SK-N-SH (cell line): ENCODE measurements at regions of chr2 and their contacts with region 1.

Region 1: DNA sequence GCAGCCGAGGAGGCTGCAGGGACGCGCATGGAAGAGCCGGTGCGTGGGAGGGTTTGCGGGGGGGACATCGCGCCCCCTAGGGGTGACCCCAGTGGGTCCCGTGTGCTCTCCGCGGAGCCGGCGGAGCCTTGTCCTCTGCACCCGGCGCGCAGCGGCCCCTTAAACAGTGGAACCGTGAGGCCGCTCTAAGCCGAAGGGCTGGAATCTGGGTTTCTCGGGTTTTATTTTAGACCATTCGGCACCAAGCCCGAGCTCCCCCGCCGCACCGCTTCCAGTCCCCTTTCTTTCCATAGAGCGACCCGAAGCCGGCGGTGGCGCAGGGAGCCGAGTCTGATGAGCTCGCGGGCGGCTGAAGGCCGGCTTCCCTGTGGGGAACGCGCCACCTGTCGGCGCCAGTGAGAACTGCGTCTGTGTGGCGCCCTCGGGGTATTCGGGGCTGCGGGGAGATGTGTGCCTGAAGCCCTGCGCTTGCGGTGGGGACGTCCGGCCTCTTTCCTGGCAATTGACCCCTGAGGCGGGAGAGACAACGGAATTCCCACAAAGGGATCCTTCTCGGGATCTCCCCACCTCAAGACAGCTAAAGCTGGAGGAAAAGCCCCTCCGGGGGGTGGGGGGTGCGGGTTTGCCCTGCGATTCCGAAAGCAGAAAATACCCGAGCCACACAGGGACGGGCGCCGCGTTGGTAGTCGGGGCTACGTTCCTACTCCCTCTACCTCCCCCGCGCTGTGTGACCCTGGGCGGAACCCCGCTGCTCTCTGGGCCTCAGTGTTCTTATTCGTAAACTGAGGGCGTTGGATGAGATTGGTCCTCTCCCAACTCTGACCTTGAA is 8.2 kb upstream of the EN1 start:
- DNase-seq: peak; percentile 93
- H3K4me3 ChIP-seq: peak overlapping the region; percentile 24 to 65
- H3K27ac ChIP-seq: no peak overlapping the region
- H3K4me1 ChIP-seq: no peaks in the 10 kb centered on the region; a peak in 1 of 4 replicates
- H3K27me3 ChIP-seq: peaks cover 99% of the 10 kb centered on the region
- CTCF ChIP-seq: peak; percentile 87
- EP300 ChIP-seq: no peak
- RAD21 ChIP-seq: peak; percentile 82

Region 2: GRCh38 chr2:118032169-118033013 is 823.3 kb before region 1 on chr2:
- CTCF ChIA-PET with region 1: interaction called, 12 read pairs
- POLR2A ChIA-PET with region 1: no interaction called
- DNase-seq: peak; percentile 53
- H3K4me3 ChIP-seq: no peak overlapping the region; a peak in 1 of 4 replicates
- H3K27ac ChIP-seq: no peak overlapping the region
- H3K4me1 ChIP-seq: no peaks in the 10 kb centered on the region
- H3K27me3 ChIP-seq: peaks cover 17% of the 10 kb centered on the region; the same call in 1 of the 2 replicates
- CTCF ChIP-seq: peak; percentile 82
- EP300 ChIP-seq: no peak
- RAD21 ChIP-seq: peak; percentile 56

Region 3: DNA sequence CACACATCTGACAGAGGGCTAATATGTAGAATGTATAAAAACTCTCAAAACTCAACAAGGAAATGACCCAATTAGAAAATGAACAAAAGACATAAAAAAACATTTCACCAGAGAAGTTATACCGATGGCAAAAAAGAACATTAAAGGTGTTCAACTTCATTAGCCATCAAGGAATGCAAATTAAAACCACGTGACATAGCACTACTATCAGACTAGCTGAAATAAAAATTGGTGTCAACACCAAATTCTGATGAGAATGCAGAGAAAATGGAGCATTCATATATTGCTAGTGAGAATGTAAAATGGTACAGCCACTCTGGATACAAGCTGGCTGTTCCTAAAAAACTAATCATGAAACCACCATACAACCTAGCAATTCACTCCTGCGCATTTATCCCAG is 639.4 kb before region 1 on chr2:
- CTCF ChIA-PET with region 1: interaction called, 57 read pairs
- POLR2A ChIA-PET with region 1: no interaction called
- DNase-seq: no peak
- H3K4me3 ChIP-seq: no peak overlapping the region
- H3K27ac ChIP-seq: no peak overlapping the region
- H3K4me1 ChIP-seq: no peaks in the 10 kb centered on the region
- H3K27me3 ChIP-seq: peaks cover 5% of the 10 kb centered on the region; the same call in 1 of the 2 replicates
- CTCF ChIP-seq: no peak
- EP300 ChIP-seq: no peak
- RAD21 ChIP-seq: no peak

Region 4: GRCh38 chr2:118227700-118228508 is 627.8 kb before region 1 on chr2:
- CTCF ChIA-PET with region 1: interaction called, 57 read pairs
- POLR2A ChIA-PET with region 1: no interaction called
- DNase-seq: no peak
- H3K4me3 ChIP-seq: no peak overlapping the region
- H3K27ac ChIP-seq: no peak overlapping the region
- H3K4me1 ChIP-seq: peaks cover 0 to 5% of the 10 kb centered on the region in 2 experiments; a peak in 1 of 4 replicates
- H3K27me3 ChIP-seq: peaks cover 57% of the 10 kb centered on the region
- CTCF ChIP-seq: no peak
- EP300 ChIP-seq: no peak
- RAD21 ChIP-seq: no peak

Region 5: DNA sequence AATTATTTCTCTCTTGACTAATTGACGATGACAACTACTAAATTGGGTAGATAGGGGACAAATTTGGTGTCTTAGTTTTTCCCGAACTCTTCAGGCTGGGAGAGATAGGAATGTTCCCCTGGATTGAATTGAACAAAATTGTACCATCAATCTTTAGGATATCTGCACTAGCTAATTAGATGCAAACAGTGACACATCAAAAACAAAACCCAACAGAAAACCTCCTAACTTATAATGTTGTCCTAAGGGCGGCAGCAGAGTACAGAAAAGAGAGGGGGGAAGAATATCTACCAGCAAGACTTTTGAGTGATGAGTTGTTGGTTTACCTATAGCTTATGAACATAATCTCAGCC is 424.5 kb before region 1 on chr2:
- CTCF ChIA-PET with region 1: interaction called, 11 read pairs
- POLR2A ChIA-PET with region 1: no interaction called
- DNase-seq: no peak
- H3K4me3 ChIP-seq: no peak overlapping the region; a peak in 1 of 4 replicates
- H3K27ac ChIP-seq: no peak overlapping the region; a peak in 1 of 4 replicates
- H3K4me1 ChIP-seq: no peaks in the 10 kb centered on the region
- H3K27me3 ChIP-seq: no peaks in the 10 kb centered on the region; the same call in 1 of the 2 replicates
- CTCF ChIP-seq: peak; percentile 40
- EP300 ChIP-seq: no peak
- RAD21 ChIP-seq: peak; percentile 46

Region 6: DNA sequence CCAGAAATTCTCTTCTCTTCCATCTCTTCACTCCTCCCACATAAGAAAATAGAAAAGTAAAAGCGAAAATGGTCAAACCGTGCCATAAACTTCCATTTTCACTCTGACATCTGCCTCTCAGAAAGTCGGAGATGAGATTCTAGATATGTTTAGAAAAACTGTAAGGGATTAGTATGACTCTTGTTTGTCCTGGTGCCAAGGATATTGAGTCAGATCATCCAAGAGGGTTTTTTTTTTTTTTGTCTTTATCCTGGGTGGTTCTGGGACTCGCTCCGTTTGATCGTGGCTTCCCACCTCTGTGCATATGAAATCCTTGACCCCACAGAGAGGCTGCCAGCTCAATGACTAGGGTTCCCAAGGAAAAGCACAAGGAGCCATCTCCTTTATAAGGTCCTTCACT is 25.5 kb before region 1 on chr2:
- CTCF ChIA-PET with region 1: interaction called, 10 read pairs
- POLR2A ChIA-PET with region 1: no interaction called
- DNase-seq: no peak
- H3K4me3 ChIP-seq: no peak overlapping the region
- H3K27ac ChIP-seq: no peak overlapping the region
- H3K4me1 ChIP-seq: no peaks in the 10 kb centered on the region; a peak in 1 of 4 replicates
- H3K27me3 ChIP-seq: peaks cover 66% of the 10 kb centered on the region
- CTCF ChIP-seq: no peak
- EP300 ChIP-seq: no peak
- RAD21 ChIP-seq: no peak